Activated CD8-positive, alpha-beta T cell treated with anti-CD3 and anti-CD28 coated beads for 36 hours (primary cell): ENCODE measurements at regions of chr9 and their contacts with region 1.

Region 1: DNA sequence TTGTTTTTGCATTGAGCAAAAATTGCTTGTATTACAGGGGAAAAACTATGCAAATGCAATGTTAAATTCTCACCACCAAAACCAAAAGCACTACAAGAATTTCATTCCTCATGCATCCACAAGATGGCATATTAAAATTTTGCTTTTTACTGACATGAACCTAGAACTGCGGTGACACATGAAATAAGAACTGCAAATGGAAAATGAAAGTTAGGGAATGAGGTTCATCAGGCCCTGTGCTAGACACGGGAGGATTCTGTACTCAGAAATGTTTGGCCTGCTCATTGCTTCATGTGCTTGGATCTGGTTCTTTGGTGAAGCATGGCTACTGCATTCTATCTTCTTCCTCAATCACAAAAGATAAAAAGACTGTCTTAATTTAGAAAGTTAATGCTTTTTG is 9.1 kb upstream of the RFK start:
- DNase-seq: peak; percentile 22
- ATAC-seq: peak; percentile 92
- H3K4me3 Mint-ChIP-seq: no peak overlapping the region
- H3K27ac Mint-ChIP-seq: peak overlapping the region; percentile 74
- H3K4me1 Mint-ChIP-seq: peaks cover 19% of the 10 kb centered on the region
- H3K27me3 Mint-ChIP-seq: no peaks in the 10 kb centered on the region
- CTCF ChIP-seq: peak; percentile 63

Region 2: DNA sequence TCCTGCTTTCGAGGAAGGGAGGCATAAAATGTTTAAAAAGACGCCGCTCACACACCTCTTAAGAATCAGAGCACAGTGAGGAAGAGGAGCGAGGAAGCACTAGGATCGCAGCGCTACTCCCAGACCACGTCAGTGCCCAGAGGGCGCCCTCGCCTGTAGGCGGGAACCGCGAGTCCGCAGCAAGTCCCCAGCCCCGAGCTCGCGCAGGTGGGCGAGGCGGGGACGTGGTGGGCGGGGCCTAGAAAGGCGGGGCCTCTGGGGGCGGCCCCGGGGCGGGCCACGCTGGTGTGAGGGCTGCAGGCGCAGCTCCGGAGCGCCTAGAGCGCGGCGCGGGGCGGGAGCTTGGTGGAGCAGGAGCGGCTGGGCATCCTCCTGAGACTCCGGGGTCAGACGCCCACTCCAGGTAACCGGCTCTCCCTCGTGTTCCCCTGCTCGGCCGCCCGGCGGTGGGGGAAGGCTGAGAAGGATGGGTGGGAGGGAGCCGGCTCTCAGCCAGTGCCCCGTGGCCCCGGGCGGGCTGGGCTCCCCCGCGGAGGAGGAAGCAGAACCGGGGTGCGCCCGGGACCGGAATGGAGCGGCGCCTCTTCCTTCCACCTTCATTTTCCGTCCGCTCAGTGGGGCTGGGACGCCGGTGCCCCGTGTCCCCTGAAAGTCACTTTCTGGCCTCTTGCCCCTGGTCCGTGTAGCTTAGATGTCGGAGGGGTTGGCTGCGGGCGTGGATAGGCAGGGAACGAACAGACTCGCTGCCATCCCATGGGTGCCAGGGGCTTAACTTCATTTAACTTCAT is 55.7 kb after region 1 on chr9 and contains the start of gene GCNT1:
- CTCF ChIA-PET with region 1: no interaction called
- POLR2A ChIA-PET with region 1: no interaction called
- intact Hi-C with region 1: loop called (anchors 5 kb)
- DNase-seq: peak; percentile 92
- ATAC-seq: peak; percentile 98
- H3K4me3 Mint-ChIP-seq: peak within 1 kb of the TSS; percentile 88
- H3K27ac Mint-ChIP-seq: peak within 1 kb of the TSS; percentile 75
- H3K4me1 Mint-ChIP-seq: peaks cover 23% of the 10 kb centered on the region
- H3K27me3 Mint-ChIP-seq: no peaks in the 10 kb centered on the region
- CTCF ChIP-seq: peak; percentile 34
- total RNA-seq, gene GCNT1: 3.5 to 4.9 TPM

Region 3: DNA sequence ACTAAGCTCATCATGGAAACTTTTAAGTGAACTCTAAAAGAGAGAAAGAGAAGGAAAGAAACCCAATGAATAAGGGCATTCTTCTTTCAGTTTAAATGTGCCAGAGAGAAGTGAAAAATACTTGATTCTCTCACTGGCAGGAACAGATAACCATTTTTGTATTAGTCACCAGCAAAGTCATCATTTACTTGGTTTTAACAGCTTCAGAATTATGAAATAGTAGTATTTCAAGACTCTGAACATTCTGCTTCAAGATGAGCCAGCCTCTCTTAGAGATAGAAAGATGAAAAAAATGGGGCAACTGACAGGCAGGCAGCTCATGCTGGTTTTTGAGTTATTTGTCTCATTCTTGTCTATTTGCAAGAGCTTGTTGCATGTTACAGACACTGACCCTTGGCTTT is 159.2 kb after region 1 on chr9:
- CTCF ChIA-PET with region 1: no interaction called
- POLR2A ChIA-PET with region 1: no interaction called
- intact Hi-C with region 1: loop called (anchors 1 kb)
- DNase-seq: no peak
- ATAC-seq: peak; percentile 85
- H3K4me3 Mint-ChIP-seq: no peak overlapping the region
- H3K27ac Mint-ChIP-seq: peak overlapping the region; percentile 41
- H3K4me1 Mint-ChIP-seq: peaks cover 22% of the 10 kb centered on the region
- H3K27me3 Mint-ChIP-seq: peaks cover 1% of the 10 kb centered on the region
- CTCF ChIP-seq: no peak